ENCODE measurements at regions of chr6 and their contacts with region 1.

Region 1: DNA sequence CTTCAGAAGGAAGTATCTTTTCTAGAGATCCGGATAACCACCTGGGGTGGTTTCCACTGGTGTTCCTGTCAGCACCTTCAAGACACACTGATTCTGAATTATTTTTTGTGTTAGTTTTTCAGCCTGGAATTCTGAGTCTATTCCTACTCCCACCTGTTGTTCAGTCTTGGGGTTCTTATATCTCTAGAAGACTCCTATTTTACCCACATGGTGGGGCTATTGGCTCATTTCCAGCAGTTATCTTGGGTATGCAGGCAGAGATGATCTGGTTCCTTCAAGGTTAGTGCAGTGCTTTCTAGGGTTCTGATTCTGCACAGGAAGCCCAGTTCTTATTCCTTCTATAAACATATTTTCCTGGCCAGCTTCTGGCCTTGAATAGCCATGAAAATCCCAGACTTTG is 175.6 kb upstream of the PDE7B start:
- DNase-seq: no peak
- ATAC-seq: no peak
- H3K4me3 ChIP-seq: no peak overlapping the region
- H3K27ac ChIP-seq: no peak overlapping the region
- H3K4me1 ChIP-seq: no peaks in the 10 kb centered on the region
- H3K27me3 ChIP-seq: no peaks in the 10 kb centered on the region
- CTCF ChIP-seq: peak in 4 of 12 donors; percentile 14 to 25 (median 16)
- POLR2A ChIP-seq: no peak

Region 2: GRCh38 chr6:135728589-135728988 is 52.7 kb after region 1 on chr6:
- intact Hi-C with region 1: no loop called
- DNase-seq: no peak
- ATAC-seq: no peak
- H3K4me3 ChIP-seq: no peak overlapping the region
- H3K27ac ChIP-seq: no peak overlapping the region
- H3K4me1 ChIP-seq: no peaks in the 10 kb centered on the region
- H3K27me3 ChIP-seq: no peaks in the 10 kb centered on the region
- CTCF ChIP-seq: no peak
- POLR2A ChIP-seq: no peak

Region 3: DNA sequence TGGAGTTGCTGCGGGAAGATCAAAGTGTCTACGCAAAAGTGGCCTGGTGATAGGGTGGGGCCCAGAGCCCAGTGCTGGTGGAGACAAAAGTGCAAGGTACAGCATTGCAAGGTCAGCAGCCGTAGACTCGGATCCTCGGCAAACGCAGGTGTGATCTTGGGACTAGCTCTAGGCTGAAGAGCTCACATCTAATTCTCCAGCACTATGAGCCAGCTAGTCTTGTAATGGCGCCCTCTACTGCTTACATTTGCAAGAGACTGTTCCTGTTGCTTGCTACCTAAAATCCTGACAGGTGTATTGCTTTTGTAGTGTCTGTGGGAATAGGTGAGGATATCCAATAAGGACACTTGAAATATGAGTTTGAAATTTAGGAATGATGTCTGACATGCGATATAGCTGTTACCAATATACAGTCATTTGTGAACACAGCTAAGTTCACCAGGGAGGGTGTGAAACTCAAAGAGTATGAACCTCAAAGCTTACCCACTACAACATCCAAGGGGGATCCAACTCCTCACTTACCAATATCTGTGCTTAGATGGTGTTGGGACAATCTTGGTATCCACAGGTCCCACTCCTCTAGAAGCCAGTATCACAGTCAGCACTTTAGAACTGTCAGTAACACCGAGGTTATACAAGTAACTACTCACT is 234.0 kb after region 1 on chr6:
- intact Hi-C with region 1: loop called in 1 of 10 experiments (anchors 10 kb)
- DNase-seq: peak in 1 of 5 donors; percentile 27
- ATAC-seq: peak in 1 of 4 donors; percentile 42
- H3K4me3 ChIP-seq: no peak overlapping the region
- H3K27ac ChIP-seq: no peak overlapping the region
- H3K4me1 ChIP-seq: no peaks in the 10 kb centered on the region
- H3K27me3 ChIP-seq: no peaks in the 10 kb centered on the region
- CTCF ChIP-seq: peak in 11 of 12 donors; percentile 27 to 60 (median 49)
- POLR2A ChIP-seq: no peak

Measured in heart left ventricle (tissue), 16 donors.